ENCODE measurements at regions of chr3 and their contacts with region 1.

Region 1: GRCh38 chr3:125141596-125142419 is 70.7 kb downstream of the SLC12A8 start:
- DNase-seq: peak; percentile 87 to 90
- ATAC-seq: peak; percentile 64
- H3K4me3 ChIP-seq: peak overlapping the region; percentile 2 to 18
- H3K27ac ChIP-seq: no peak overlapping the region
- H3K4me1 ChIP-seq: peaks cover 3 to 4% of the 10 kb centered on the region in 2 donors
- H3K27me3 ChIP-seq: no peaks in the 10 kb centered on the region

Region 2: GRCh38 chr3:125045965-125046364 is 95.8 kb before region 1 on chr3:
- intact Hi-C with region 1: loop called in 1 of 2 experiments (anchors 5 kb)
- DNase-seq: no peak
- ATAC-seq: no peak
- H3K4me3 ChIP-seq: no peak overlapping the region
- H3K27ac ChIP-seq: no peak overlapping the region
- H3K4me1 ChIP-seq: peaks cover 5 to 6% of the 10 kb centered on the region in 2 donors
- H3K27me3 ChIP-seq: no peaks in the 10 kb centered on the region

Region 3: GRCh38 chr3:125055913-125056745 is 85.7 kb before region 1 on chr3 and contains the start of gene HEG1:
- intact Hi-C with region 1: loop called in 1 of 2 experiments (anchors 2 kb)
- DNase-seq: peak; percentile 95 to 97
- ATAC-seq: peak; percentile 92
- H3K4me3 ChIP-seq: peak within 1 kb of the TSS; percentile 98
- H3K27ac ChIP-seq: peak within 1 kb of the TSS; percentile 97 to 99
- H3K4me1 ChIP-seq: peaks cover 6 to 11% of the 10 kb centered on the region in 2 donors
- H3K27me3 ChIP-seq: no peaks in the 10 kb centered on the region
- total RNA-seq, gene HEG1: 99.3 to 204 TPM

Region 4: GRCh38 chr3:125087768-125088391 is 53.9 kb before region 1 on chr3:
- intact Hi-C with region 1: no loop called
- DNase-seq: no peak
- ATAC-seq: no peak
- H3K4me3 ChIP-seq: no peak overlapping the region
- H3K27ac ChIP-seq: no peak overlapping the region
- H3K4me1 ChIP-seq: no peaks in the 10 kb centered on the region
- H3K27me3 ChIP-seq: no peaks in the 10 kb centered on the region

Measured in aorta (tissue), 5 donors.